Activated CD8-positive, alpha-beta T cell treated with anti-CD3 and anti-CD28 coated beads for 36 hours (primary cell): ENCODE measurements at regions of chr22 and their contacts with region 1.

Region 1: DNA sequence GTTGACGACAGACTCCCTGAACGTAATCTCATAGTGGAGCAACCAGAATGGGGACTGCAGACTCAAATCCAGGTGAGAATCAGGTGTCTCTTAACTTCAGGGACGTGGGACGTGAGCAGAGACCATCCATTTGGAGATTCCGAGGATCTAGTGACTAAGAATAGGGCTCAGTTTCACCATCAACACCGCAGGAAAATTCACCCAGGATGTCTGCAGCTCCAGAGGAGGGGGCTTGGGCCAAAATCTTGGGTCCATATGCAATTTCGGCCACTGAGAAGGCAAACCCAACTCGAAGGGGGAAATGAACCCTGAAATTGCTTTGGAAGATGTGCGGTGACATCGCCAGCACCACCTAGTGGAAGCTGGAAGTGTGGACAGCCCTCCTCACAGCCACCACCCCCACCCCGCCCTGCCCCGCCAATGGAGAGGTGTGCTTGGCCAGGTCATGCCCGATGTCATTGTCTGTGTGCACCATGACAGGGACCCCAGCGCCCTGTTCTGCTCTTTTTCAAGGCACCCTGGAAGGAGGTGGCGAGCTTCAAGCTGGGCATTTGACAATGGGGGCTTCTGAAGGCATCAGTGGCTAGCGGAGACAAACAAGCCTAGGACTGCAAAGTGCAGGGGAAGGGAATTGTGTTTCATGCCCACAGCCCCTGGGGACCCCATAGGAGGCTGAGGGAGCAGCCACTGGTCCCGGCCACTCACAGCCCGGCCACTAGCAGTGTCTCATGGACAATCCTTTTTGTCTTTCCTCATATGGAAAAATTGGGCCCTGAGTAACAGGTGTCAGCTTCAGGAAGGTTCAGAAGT is 24.8 kb downstream of the APOL1 start:
- DNase-seq: peak; percentile 83
- ATAC-seq: peak; percentile 88
- H3K4me3 Mint-ChIP-seq: no peak overlapping the region
- H3K27ac Mint-ChIP-seq: peak overlapping the region; percentile 22
- H3K4me1 Mint-ChIP-seq: peaks cover 24% of the 10 kb centered on the region
- H3K27me3 Mint-ChIP-seq: no peaks in the 10 kb centered on the region
- CTCF ChIP-seq: peak; percentile 71

Region 2: DNA sequence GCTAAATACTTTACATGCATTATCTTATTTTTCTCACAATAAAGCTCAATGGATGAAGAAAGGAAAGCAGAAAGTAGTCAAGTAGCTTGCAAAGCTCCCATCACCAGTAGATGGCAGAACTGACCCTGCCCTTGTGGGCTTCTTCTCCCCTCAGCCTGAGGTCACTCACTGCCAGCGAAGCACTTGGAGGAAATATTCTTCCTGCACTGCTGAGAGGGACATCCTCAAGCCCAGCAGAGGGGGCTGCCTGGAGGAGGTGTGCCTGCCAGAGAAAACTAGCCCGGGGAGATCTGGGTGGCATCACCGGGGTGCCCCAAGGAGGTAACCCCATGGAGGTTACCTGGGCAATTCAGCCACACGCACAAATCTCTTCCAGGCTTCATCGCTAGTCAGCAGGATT is 82.7 kb before region 1 on chr22:
- CTCF ChIA-PET with region 1: interaction called, 20 read pairs
- POLR2A ChIA-PET with region 1: no interaction called
- intact Hi-C with region 1: no loop called
- DNase-seq: peak; percentile 70
- ATAC-seq: peak; percentile 65
- H3K4me3 Mint-ChIP-seq: no peak overlapping the region
- H3K27ac Mint-ChIP-seq: no peak overlapping the region
- H3K4me1 Mint-ChIP-seq: peaks cover 27% of the 10 kb centered on the region
- H3K27me3 Mint-ChIP-seq: no peaks in the 10 kb centered on the region
- CTCF ChIP-seq: peak; percentile 76

Region 3: GRCh38 chr22:36258701-36259614 is 18.7 kb before region 1 on chr22:
- CTCF ChIA-PET with region 1: interaction called, 10 read pairs
- POLR2A ChIA-PET with region 1: interaction called, 4 read pairs
- intact Hi-C with region 1: no loop called
- DNase-seq: peak; percentile 76
- ATAC-seq: peak; percentile 75
- H3K4me3 Mint-ChIP-seq: peak overlapping the region; percentile 33
- H3K27ac Mint-ChIP-seq: peak overlapping the region; percentile 89
- H3K4me1 Mint-ChIP-seq: peaks cover 44% of the 10 kb centered on the region
- H3K27me3 Mint-ChIP-seq: no peaks in the 10 kb centered on the region
- CTCF ChIP-seq: no peak

Region 4: DNA sequence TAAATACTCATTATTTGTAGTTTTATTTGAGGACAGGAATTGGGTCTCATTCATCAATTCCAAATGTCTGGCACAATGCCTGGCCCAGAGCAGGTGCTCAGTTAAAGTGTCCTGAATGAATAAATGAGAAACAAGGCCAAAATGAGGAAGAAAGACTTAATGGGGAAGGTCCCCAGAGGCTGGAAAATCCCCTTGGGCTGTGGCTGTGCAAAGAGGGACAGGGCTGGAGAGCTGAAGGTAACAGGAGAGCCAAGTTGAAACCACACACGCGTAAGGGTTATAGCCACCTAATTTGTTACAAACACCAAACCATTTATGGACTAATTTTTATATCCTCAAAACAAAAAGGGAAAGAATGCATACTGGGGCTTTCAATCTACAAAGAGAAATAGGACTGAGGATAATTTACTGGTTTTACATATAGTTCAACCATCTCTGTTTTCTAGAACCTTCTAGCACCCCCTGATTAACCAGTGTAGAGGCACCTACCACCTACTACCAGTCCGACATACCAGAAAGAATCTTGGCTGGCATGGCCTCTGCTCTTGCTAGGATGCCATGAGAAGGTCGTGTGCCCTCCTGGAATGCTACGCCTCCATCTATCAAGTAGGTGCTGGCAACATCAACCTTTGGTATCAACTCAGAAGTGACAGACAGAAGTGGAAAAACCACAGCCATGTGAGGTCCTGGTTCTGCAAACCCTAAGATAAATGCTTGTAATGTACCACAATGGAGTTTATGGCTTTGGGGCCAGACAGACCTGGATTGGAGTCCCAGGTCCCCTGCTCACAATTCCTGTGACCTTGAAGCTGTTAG is 81.7 kb after region 1 on chr22:
- CTCF ChIA-PET with region 1: no interaction called
- POLR2A ChIA-PET with region 1: no interaction called
- intact Hi-C with region 1: no loop called
- DNase-seq: no peak
- ATAC-seq: no peak
- H3K4me3 Mint-ChIP-seq: peak overlapping the region; percentile 51
- H3K27ac Mint-ChIP-seq: peak overlapping the region; percentile 91
- H3K4me1 Mint-ChIP-seq: peaks cover 94% of the 10 kb centered on the region
- H3K27me3 Mint-ChIP-seq: no peaks in the 10 kb centered on the region
- CTCF ChIP-seq: no peak